Activated CD4-positive, alpha-beta T cell treated with anti-CD3 and anti-CD28 coated beads, Interleukin-2, amount 10 ng/mL, durations not matched to agents 24 days and 14 days (primary cell): ENCODE measurements at regions of chr17 and their contacts with region 1.

Region 1: GRCh38 chr17:38752119-38752929 is at the start of gene PSMB3:
- DNase-seq: peak; percentile 99
- H3K4me3 Mint-ChIP-seq: peak within 1 kb of the TSS; percentile 99
- H3K27ac Mint-ChIP-seq: peak within 1 kb of the TSS; percentile 98
- H3K4me1 Mint-ChIP-seq: peaks cover 39% of the 10 kb centered on the region
- H3K27me3 Mint-ChIP-seq: peaks cover 27% of the 10 kb centered on the region
- total RNA-seq, gene PSMB3: 356 and 358 TPM in 2 replicates

Region 2: GRCh38 chr17:38550661-38551060 is 201.7 kb before region 1 on chr17:
- intact Hi-C with region 1: no loop called
- DNase-seq: no peak
- H3K4me3 Mint-ChIP-seq: no peak overlapping the region
- H3K27ac Mint-ChIP-seq: no peak overlapping the region
- H3K4me1 Mint-ChIP-seq: no peaks in the 10 kb centered on the region
- H3K27me3 Mint-ChIP-seq: peaks cover 17% of the 10 kb centered on the region

Region 3: DNA sequence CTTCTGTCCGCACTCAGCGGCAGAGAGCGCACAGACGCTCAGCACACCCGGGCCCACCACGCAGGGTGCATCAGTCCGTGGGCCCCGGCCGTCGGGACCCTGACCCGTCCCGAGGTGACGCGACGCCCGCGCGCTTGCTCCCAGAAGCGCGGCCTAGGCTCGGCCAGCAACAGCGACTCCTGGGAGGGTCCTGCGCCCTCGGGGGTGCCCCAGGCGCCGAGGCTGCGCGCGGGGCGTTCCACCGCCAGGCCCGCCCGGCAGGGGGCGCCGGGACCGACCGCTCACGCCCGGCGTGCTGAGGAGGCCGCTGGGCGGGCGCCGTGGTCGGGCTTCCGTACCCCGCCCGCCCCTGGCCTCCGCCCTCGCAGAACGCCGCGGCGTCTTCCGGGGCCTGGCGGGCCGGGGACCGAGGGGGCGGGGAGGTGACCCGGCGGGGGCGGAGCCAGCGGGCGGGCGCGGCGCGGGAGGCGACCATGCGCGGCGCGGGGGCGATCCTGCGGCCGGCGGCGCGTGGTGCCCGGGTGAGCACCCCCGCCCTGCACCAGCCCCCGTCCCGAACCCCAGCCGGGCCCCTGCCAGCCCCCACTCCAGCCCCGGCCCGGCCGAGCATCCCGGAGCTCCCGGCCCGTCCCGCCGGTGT is 22.3 kb before region 1 on chr17 and contains the start of gene CISD3:
- intact Hi-C with region 1: loop called (anchors 1 kb)
- DNase-seq: peak; percentile 97
- H3K4me3 Mint-ChIP-seq: peak within 1 kb of the TSS; percentile 93
- H3K27ac Mint-ChIP-seq: peak within 1 kb of the TSS; percentile 95
- H3K4me1 Mint-ChIP-seq: peaks cover 72% of the 10 kb centered on the region
- H3K27me3 Mint-ChIP-seq: no peaks in the 10 kb centered on the region
- total RNA-seq, gene CISD3: 44.0 and 46.7 TPM in 2 replicates

Region 4: GRCh38 chr17:38824899-38825761 is 72.8 kb after region 1 on chr17 and contains the start of gene CWC25:
- intact Hi-C with region 1: loop called (anchors 1 kb)
- DNase-seq: peak; percentile 100
- H3K4me3 Mint-ChIP-seq: peak within 1 kb of the TSS; percentile 98
- H3K27ac Mint-ChIP-seq: peak within 1 kb of the TSS; percentile 100
- H3K4me1 Mint-ChIP-seq: peaks cover 35% of the 10 kb centered on the region
- H3K27me3 Mint-ChIP-seq: no peaks in the 10 kb centered on the region
- total RNA-seq, gene CWC25: 32.1 and 32.4 TPM in 2 replicates

Region 5: GRCh38 chr17:38868817-38869525 is 116.6 kb after region 1 on chr17:
- intact Hi-C with region 1: loop called (anchors 1 kb)
- DNase-seq: peak; percentile 95
- H3K4me3 Mint-ChIP-seq: peak overlapping the region; percentile 97
- H3K27ac Mint-ChIP-seq: peak overlapping the region; percentile 96
- H3K4me1 Mint-ChIP-seq: peaks cover 42% of the 10 kb centered on the region
- H3K27me3 Mint-ChIP-seq: peaks cover 2% of the 10 kb centered on the region

Region 6: DNA sequence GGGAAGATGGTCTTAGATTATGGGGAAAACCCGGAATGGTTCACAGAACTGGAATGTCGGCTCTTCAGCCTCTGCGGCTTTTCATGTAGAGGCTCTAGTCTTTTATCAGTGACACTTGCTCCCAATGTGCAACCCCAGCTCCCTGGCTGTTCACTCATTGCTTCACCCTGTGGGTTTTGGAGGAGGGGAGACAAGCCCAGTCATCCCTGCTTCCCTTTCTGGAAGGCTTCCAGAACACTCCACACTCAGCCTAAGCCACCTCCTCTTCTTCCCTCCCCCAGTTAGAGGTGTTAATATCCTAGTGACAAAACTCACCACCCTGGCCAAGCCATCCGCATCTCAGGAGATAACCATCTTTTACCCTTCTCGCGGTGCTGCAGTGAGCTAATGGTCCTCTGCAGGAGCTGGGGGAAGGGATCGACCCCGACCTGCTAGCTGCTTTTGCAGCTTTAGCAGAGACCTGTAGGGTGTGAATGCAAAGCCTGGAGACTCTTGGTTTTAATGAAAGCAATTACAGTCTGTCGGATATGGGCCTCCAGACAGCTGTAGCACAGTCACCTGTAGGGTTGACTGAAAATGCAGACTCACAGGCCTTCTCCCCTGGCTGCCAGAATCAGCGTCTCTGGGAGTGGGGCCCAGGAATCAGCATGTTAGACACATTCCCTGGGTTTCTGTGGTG is 148.8 kb after region 1 on chr17:
- intact Hi-C with region 1: no loop called
- DNase-seq: peak; percentile 68
- H3K4me3 Mint-ChIP-seq: peak overlapping the region; percentile 21
- H3K27ac Mint-ChIP-seq: peak overlapping the region; percentile 86
- H3K4me1 Mint-ChIP-seq: peaks cover 40% of the 10 kb centered on the region
- H3K27me3 Mint-ChIP-seq: no peaks in the 10 kb centered on the region